ENCODE measurements at regions of chr10 and their contacts with region 1.

Region 1: DNA sequence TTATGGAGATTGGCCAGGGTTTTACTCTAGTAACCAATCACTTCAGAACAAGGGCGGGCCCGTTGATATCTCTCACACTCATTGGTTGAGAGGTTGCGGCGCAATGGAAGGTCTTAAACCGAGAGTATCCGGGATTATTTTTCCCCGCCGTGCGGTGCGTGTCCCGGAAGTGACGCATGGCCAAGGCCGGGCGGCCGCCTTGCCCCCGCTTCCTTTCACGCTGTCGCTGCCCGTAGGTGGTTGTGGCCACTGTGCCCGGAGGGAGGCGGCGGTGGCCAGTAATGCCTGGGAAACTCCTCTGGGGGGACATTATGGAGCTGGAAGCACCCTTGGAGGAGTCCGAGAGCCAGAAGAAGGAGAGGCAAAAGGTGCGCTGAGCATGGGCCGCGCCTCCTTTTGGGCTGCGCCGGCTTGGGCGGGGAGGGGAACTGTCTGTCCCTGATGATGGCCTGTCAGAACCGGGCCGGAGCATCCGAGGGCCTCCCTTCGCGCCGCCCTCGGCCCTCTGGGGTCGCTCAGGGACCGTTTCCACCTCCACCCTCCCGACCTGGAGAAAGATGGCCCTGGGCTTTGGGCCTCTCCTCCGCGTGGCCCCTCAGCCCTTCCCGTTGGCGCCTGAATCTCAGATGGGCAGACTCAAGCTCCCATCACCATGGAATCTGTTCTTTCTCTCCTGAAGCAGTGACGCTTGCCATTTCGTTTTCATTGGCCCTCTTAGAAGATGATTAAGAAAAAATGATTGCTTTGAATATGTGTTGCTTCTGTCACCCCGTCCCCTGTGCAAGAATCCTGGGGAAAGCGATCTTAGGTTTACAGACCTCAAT is at the start of gene DDX50:
- DNase-seq: peak; percentile 99
- H3K4me3 ChIP-seq: peak within 1 kb of the TSS; percentile 75 to 91 (median 88)
- H3K27ac ChIP-seq: peak within 1 kb of the TSS; percentile 94 to 99 (median 98)
- H3K4me1 ChIP-seq: peaks cover 0 to 26% (median 24%) of the 10 kb centered on the region in 4 donors
- H3K27me3 ChIP-seq: no peaks in the 10 kb centered on the region
- CTCF ChIP-seq: no peak
- EP300 ChIP-seq: peak in 1 of 4 donors; percentile 43
- POLR2A ChIP-seq: peak; percentile 70 to 76
- total RNA-seq, gene DDX50: 39.1 to 64.3 (median 51.6) TPM

Region 2: GRCh38 chr10:68348265-68348741 is 553.0 kb before region 1 on chr10:
- intact Hi-C with region 1: loop called (anchors 5 kb)
- DNase-seq: no peak
- H3K4me3 ChIP-seq: no peak overlapping the region
- H3K27ac ChIP-seq: peak overlapping the region in 1 of 4 donors; percentile 16
- H3K4me1 ChIP-seq: no peaks in the 10 kb centered on the region
- H3K27me3 ChIP-seq: no peaks in the 10 kb centered on the region
- CTCF ChIP-seq: peak in 3 of 4 experiments; percentile 45 to 62 (median 48)
- EP300 ChIP-seq: no peak
- POLR2A ChIP-seq: no peak

Region 3: GRCh38 chr10:68526626-68527307 is 374.5 kb before region 1 on chr10:
- intact Hi-C with region 1: loop called (anchors 2 kb)
- DNase-seq: no peak
- H3K4me3 ChIP-seq: peak overlapping the region; percentile 80 to 92 (median 88)
- H3K27ac ChIP-seq: peak overlapping the region; percentile 93 to 96 (median 94)
- H3K4me1 ChIP-seq: peaks cover 0 to 13% (median 8%) of the 10 kb centered on the region in 4 donors
- H3K27me3 ChIP-seq: no peaks in the 10 kb centered on the region
- CTCF ChIP-seq: no peak
- EP300 ChIP-seq: no peak
- POLR2A ChIP-seq: no peak

Region 4: GRCh38 chr10:68697106-68697505 is 204.2 kb before region 1 on chr10:
- intact Hi-C with region 1: no loop called
- DNase-seq: no peak
- H3K4me3 ChIP-seq: no peak overlapping the region
- H3K27ac ChIP-seq: no peak overlapping the region
- H3K4me1 ChIP-seq: no peaks in the 10 kb centered on the region
- H3K27me3 ChIP-seq: no peaks in the 10 kb centered on the region
- CTCF ChIP-seq: no peak
- EP300 ChIP-seq: no peak
- POLR2A ChIP-seq: no peak

Region 5: GRCh38 chr10:68720793-68721672 is 180.3 kb before region 1 on chr10 and contains the start of gene CCAR1:
- intact Hi-C with region 1: loop called (anchors 2 kb)
- DNase-seq: peak; percentile 98
- H3K4me3 ChIP-seq: peak within 1 kb of the TSS; percentile 83 to 99 (median 84)
- H3K27ac ChIP-seq: peak within 1 kb of the TSS; percentile 92 to 97 (median 95)
- H3K4me1 ChIP-seq: peaks cover 0 to 11% (median 9%) of the 10 kb centered on the region in 4 donors
- H3K27me3 ChIP-seq: no peaks in the 10 kb centered on the region
- CTCF ChIP-seq: no peak
- EP300 ChIP-seq: peak in 1 of 4 donors; percentile 15
- POLR2A ChIP-seq: peak; percentile 38 to 47
- total RNA-seq, gene CCAR1: 37.6 to 69.2 (median 45.8) TPM

Region 6: GRCh38 chr10:68826764-68827591 is 74.3 kb before region 1 on chr10 and contains the start of gene STOX1:
- intact Hi-C with region 1: loop called (anchors 5 kb)
- DNase-seq: peak; percentile 65
- H3K4me3 ChIP-seq: peak within 1 kb of the TSS; percentile 37 to 65 (median 52)
- H3K27ac ChIP-seq: peak within 1 kb of the TSS; percentile 3 to 68 (median 46)
- H3K4me1 ChIP-seq: peaks cover 0 to 13% (median 10%) of the 10 kb centered on the region in 4 donors
- H3K27me3 ChIP-seq: peaks cover 0 to 3% (median 0%) of the 10 kb centered on the region in 3 donors
- CTCF ChIP-seq: no peak
- EP300 ChIP-seq: no peak
- POLR2A ChIP-seq: no peak
- total RNA-seq, gene STOX1: 0.41 to 2.9 (median 1.8) TPM

Region 7: GRCh38 chr10:69025370-69025896 is 124.1 kb after region 1 on chr10:
- intact Hi-C with region 1: no loop called
- DNase-seq: no peak
- H3K4me3 ChIP-seq: no peak overlapping the region
- H3K27ac ChIP-seq: no peak overlapping the region
- H3K4me1 ChIP-seq: no peaks in the 10 kb centered on the region
- H3K27me3 ChIP-seq: no peaks in the 10 kb centered on the region
- CTCF ChIP-seq: no peak
- EP300 ChIP-seq: no peak
- POLR2A ChIP-seq: no peak